BJ (cell line): ENCODE measurements at regions of chr9 and their contacts with region 1.

Region 1: GRCh38 chr9:2676466-2676865 is 40.8 kb upstream of the KCNV2 start:
- DNase-seq: no peak
- H3K4me3 ChIP-seq: no peak overlapping the region
- H3K27me3 ChIP-seq: no peaks in the 10 kb centered on the region
- CTCF ChIP-seq: no peak

Region 2: DNA sequence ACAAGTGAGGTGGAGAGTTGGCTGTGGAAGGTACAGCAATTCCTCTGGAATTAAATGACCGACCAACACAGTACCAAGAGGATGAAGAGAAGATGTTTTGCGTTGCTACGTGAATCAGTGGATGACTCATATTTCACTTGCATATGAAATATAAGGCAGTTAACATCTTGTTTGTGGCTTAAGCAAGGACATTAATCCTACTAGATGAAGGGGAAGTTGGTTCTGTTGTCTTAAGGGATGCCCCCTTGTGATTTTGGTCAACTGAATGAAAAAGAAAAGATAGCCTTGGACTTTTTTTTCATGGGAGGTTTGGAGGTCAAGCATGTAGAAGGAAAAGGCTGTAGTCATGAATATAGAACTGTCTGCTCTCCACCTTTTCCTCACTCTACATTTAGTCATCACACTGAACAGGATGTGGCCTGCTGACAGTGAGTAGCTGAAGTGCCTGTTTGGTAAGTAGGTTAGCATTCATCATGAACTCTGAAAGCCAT is 21.0 kb before region 1 on chr9:
- CTCF ChIA-PET with region 1: no interaction called
- POLR2A ChIA-PET with region 1: no interaction called
- DNase-seq: peak; percentile 79
- H3K4me3 ChIP-seq: no peak overlapping the region
- H3K27me3 ChIP-seq: no peaks in the 10 kb centered on the region
- CTCF ChIP-seq: no peak

Region 3: GRCh38 chr9:2722715-2723114 is 46.2 kb after region 1 on chr9:
- CTCF ChIA-PET with region 1: no interaction called
- POLR2A ChIA-PET with region 1: interaction called, 17 read pairs
- DNase-seq: peak; percentile 39
- H3K4me3 ChIP-seq: no peak overlapping the region
- H3K27me3 ChIP-seq: no peaks in the 10 kb centered on the region
- CTCF ChIP-seq: no peak